Gastrocnemius medialis (tissue), 4 donors: ENCODE measurements at regions of chr18 and their contacts with region 1.

Region 1: GRCh38 chr18:12883684-12884405 is at the start of gene PTPN2:
- DNase-seq: peak; percentile 88 to 92
- ATAC-seq: peak; percentile 91 to 95
- H3K4me3 ChIP-seq: peak within 1 kb of the TSS; percentile 72 to 90 (median 82)
- H3K27ac ChIP-seq: peak within 1 kb of the TSS; percentile 92 to 98 (median 96)
- H3K4me1 ChIP-seq: peaks cover 16 to 20% of the 10 kb centered on the region in 2 donors
- H3K27me3 ChIP-seq: no peaks in the 10 kb centered on the region
- CTCF ChIP-seq: no peak
- POLR2A ChIP-seq: peak; percentile 93 to 94
- total RNA-seq, gene PTPN2: 17.0 to 20.0 (median 17.5) TPM

Region 2: GRCh38 chr18:12702221-12703095 is 181.4 kb before region 1 on chr18 and contains the starts of genes CEP76 and PSMG2:
- in situ Hi-C with region 1: no loop called
- intact Hi-C with region 1: loop called (anchors 10 kb)
- DNase-seq: peak; percentile 76 to 87
- ATAC-seq: peak; percentile 95 to 96
- H3K4me3 ChIP-seq: peak within 1 kb of the TSS; percentile 72 to 99 (median 94)
- H3K27ac ChIP-seq: peak within 1 kb of the TSS; percentile 95 to 99 (median 98)
- H3K4me1 ChIP-seq: peaks cover 28 to 29% of the 10 kb centered on the region in 2 donors
- H3K27me3 ChIP-seq: no peaks in the 10 kb centered on the region
- CTCF ChIP-seq: peak in 2 of 5 experiments; percentile 6 to 16
- POLR2A ChIP-seq: peak; percentile 76 to 84
- total RNA-seq, gene CEP76: 5.4 to 9.1 (median 6.8) TPM
- total RNA-seq, gene PSMG2: 49.6 to 94.2 (median 63.4) TPM

Region 3: DNA sequence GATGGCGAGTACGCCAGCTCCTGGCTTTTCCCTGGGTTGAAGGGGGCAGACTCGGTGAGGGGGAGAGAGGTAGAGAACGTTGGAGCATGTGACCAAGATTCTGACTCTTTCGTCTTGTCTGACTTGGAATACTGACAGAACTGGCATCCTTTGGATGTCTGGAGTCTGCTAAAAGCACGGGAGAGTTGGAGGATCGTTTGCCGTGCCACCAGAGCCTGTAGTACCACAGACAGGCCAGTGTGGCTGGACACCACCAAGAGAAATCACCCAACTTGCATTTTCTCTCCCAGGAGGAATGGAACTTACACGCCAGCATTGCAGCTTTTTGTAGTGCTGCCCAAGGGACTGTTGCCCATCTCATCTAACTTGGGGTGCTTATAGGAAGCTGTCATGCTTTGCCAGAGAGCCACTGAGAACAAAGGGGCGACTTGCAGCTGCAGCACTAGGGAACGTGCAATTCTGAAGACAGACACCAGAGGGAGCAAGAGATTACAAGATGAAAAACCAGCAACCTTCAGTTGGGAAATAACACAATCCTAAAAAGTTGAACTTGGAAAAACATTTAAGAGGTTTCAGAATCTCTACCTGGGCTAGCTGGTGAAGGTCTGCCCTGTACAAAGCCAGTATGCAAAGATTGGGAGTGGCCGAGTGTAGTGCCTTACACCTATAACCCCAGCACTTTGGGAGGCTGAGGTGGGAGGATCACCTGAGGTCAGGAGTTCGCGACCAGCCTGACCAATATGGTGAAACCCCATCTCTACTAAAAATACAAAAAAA is 156.9 kb before region 1 on chr18:
- in situ Hi-C with region 1: no loop called
- intact Hi-C with region 1: loop called (anchors 5 kb)
- DNase-seq: peak; percentile 14 to 25
- ATAC-seq: peak in 1 of 2 donors; percentile 58
- H3K4me3 ChIP-seq: no peak overlapping the region
- H3K27ac ChIP-seq: no peak overlapping the region
- H3K4me1 ChIP-seq: no peaks in the 10 kb centered on the region
- H3K27me3 ChIP-seq: no peaks in the 10 kb centered on the region
- CTCF ChIP-seq: peak; percentile 85 to 90 (median 89)
- POLR2A ChIP-seq: no peak

Region 4: GRCh38 chr18:12838178-12838634 is 45.6 kb before region 1 on chr18:
- in situ Hi-C with region 1: no loop called
- intact Hi-C with region 1: loop called (anchors 5 kb)
- DNase-seq: peak in 1 of 2 donors; percentile 19
- ATAC-seq: peak in 1 of 2 donors; percentile 69
- H3K4me3 ChIP-seq: no peak overlapping the region
- H3K27ac ChIP-seq: peak overlapping the region in 2 of 4 donors; percentile 8 to 38
- H3K4me1 ChIP-seq: peaks cover 11 to 12% of the 10 kb centered on the region in 2 donors
- H3K27me3 ChIP-seq: no peaks in the 10 kb centered on the region
- CTCF ChIP-seq: no peak
- POLR2A ChIP-seq: no peak